Activated CD4-positive, alpha-beta memory T cell treated with anti-CD3 and anti-CD28 coated beads, Interleukin-2, amount 10 ng/mL, durations not matched to agents 7 days and 5 days (primary cell): ENCODE measurements at regions of chr21 and their contacts with region 1.

Region 1: DNA sequence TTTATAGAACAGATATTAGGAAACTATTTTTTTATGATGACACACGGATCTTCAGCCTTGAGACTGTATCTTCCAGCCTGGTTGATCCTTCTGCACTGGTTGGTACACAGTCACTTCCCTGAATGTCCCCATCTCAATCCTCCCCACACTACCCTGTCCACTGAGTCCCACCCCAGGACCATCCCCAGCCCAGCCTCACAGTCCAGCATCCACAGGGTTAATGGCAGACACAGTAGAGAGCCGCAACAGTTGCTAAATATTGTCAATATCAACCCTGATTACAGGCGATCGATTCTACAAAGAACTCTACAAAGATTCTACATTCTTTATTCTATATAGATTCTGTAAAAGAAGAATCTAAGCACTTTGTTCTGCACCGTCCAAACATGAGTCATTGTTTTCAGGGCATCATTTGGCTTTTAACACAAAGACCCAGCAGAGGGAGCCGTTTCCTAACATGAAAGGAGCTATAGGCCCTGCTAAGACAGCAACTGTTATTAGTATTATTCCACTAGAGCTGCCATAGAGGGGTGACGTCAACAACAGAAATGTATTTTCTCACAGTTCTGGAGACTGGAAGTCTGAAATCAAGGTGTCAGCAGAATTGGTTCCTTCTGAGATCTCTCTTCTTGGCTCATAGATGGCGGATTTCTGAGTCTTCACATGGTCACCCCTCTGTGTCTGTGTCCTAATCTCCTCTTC is 30.1 kb upstream of the IFNAR2 start:
- DNase-seq: peak; percentile 83
- H3K4me3 Mint-ChIP-seq: no peak overlapping the region
- H3K27ac Mint-ChIP-seq: no peak overlapping the region
- H3K4me1 Mint-ChIP-seq: peaks cover 25% of the 10 kb centered on the region
- H3K27me3 Mint-ChIP-seq: peaks cover 10% of the 10 kb centered on the region

Region 2: GRCh38 chr21:32940079-32941014 is 259.3 kb before region 1 on chr21:
- CTCF ChIA-PET with region 1: interaction called, 27 read pairs
- POLR2A ChIA-PET with region 1: no interaction called
- DNase-seq: peak; percentile 39
- H3K4me3 Mint-ChIP-seq: no peak overlapping the region
- H3K27ac Mint-ChIP-seq: no peak overlapping the region
- H3K4me1 Mint-ChIP-seq: no peaks in the 10 kb centered on the region
- H3K27me3 Mint-ChIP-seq: peaks cover 21% of the 10 kb centered on the region

Region 3: DNA sequence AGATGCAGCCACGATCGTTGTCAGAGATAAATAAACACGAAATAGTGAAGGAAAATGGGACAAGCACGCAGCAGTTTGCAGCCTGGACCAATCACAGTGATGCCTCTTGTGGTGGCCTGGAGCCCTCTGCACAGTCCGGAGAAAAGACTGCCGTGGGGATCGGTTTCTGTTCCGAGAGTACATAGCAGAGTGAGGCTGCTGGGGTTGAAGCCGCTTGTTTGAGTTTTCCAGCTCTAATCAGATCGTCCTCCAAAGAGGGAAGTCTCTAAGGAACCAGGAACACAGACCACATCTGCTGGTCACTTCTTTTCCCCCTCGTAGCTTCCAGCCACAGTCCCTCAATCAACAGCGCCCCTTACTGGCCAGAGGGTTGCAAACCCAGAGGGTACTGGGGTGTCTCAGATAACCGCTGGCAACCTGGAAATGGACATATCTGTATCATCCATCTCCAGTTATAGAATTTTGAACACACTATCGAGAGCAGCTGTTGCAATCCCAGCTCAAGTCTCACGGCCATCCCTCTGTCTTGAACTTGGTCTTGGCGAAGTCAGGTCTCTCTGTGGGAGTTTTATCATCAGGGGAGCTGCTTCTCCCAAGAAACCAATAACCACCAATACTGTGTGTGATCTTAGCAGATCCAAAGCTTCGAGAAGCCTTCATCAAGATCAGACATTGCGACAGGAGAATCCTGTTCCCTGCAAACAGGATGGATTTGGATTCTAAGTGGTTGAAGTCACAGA is 72.3 kb before region 1 on chr21:
- CTCF ChIA-PET with region 1: interaction called, 28 read pairs
- POLR2A ChIA-PET with region 1: no interaction called
- DNase-seq: peak; percentile 67
- H3K4me3 Mint-ChIP-seq: peak overlapping the region; percentile 31
- H3K27ac Mint-ChIP-seq: no peak overlapping the region
- H3K4me1 Mint-ChIP-seq: peaks cover 3% of the 10 kb centered on the region
- H3K27me3 Mint-ChIP-seq: peaks cover 24% of the 10 kb centered on the region

Region 4: GRCh38 chr21:33238565-33239255 is 39.0 kb after region 1 on chr21:
- CTCF ChIA-PET with region 1: interaction called, 11 read pairs
- POLR2A ChIA-PET with region 1: interaction called, 9 read pairs
- DNase-seq: peak; percentile 26
- H3K4me3 Mint-ChIP-seq: peak overlapping the region; percentile 41
- H3K27ac Mint-ChIP-seq: peak overlapping the region; percentile 92
- H3K4me1 Mint-ChIP-seq: peaks cover 71% of the 10 kb centered on the region
- H3K27me3 Mint-ChIP-seq: no peaks in the 10 kb centered on the region

Region 5: GRCh38 chr21:33374450-33375096 is 174.9 kb after region 1 on chr21:
- CTCF ChIA-PET with region 1: interaction called, 14 read pairs
- POLR2A ChIA-PET with region 1: interaction called, 5 read pairs
- DNase-seq: peak; percentile 67
- H3K4me3 Mint-ChIP-seq: no peak overlapping the region
- H3K27ac Mint-ChIP-seq: no peak overlapping the region
- H3K4me1 Mint-ChIP-seq: peaks cover 12% of the 10 kb centered on the region
- H3K27me3 Mint-ChIP-seq: peaks cover 48% of the 10 kb centered on the region

Region 6: GRCh38 chr21:33572350-33572749 is 372.7 kb after region 1 on chr21:
- CTCF ChIA-PET with region 1: no interaction called
- POLR2A ChIA-PET with region 1: no interaction called
- DNase-seq: no peak
- H3K4me3 Mint-ChIP-seq: no peak overlapping the region
- H3K27ac Mint-ChIP-seq: no peak overlapping the region
- H3K4me1 Mint-ChIP-seq: peaks cover 25% of the 10 kb centered on the region
- H3K27me3 Mint-ChIP-seq: no peaks in the 10 kb centered on the region